Head of caudate nucleus (tissue), 42 donors: ENCODE measurements at regions of chr3 and their contacts with region 1.

Region 1: GRCh38 chr3:125186261-125186787 is 26.2 kb downstream of the SLC12A8 start:
- DNase-seq: peak in 41 of 42 donors; percentile 19 to 87 (median 60)

Region 2: DNA sequence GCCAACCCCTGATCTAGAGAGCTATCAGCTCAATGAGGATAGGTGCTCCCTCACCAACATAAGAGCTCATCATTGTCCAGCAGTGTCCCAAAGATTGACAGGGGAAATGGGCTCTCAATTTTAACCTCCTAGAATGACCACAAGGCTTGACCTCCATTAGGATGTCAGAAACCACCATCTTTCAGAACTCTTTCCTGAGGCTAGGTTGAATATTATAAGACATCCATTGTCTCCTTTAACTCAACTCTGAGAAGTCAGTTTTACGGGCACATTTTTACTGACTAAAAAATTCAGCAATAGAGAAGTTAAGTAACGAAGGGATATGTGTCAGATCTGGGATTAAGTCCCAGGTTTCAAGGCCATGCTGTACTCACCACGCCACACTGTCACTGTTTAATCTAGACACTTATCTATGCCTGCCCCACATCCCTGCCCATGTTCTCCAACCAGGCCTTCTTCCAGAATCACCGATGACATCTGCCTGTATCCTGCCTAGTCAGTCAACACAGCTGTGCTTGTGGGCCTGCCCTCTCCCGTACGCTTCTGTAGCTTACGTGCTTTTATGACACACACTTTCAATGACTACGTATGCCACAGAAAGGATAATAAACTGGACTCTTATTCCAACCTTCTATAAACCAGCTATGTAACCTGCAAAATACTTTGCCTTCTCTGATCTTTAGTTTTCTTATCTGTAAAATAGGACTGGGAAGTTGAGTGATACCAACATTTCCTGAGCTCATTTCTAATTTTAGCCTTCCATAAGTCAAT is 234.6 kb before region 1 on chr3:
- intact Hi-C with region 1: no loop called
- DNase-seq: no peak

Region 3: DNA sequence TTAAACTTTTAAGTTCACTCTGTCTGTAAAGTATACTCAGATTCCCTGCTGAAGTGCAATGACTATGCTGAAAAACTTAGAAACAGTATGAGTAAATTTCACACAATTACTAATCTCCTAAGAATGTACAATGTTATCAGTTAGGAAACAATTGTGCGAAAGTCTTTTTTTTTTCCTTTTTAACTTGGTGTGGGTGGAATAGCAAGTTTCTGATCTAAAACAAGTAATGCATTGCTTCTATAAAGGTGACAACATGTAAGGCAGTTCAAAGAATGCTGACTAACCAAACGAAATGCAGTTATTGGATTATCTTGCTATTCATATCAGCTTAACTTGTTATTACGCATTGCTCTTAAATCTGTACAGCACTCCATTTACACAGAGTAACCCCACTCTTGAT is 45.6 kb after region 1 on chr3:
- intact Hi-C with region 1: loop called (anchors 10 kb)
- DNase-seq: no peak

Region 4: GRCh38 chr3:125496701-125497100 is 310.4 kb after region 1 on chr3:
- intact Hi-C with region 1: no loop called
- DNase-seq: no peak